Thyroid gland (tissue), 4 donors: ENCODE measurements at regions of chr19 and their contacts with region 1.

Region 1: GRCh38 chr19:16771618-16772017 is 52.0 kb downstream of the NWD1 start:
- DNase-seq: peak; percentile 73 to 78
- H3K4me3 ChIP-seq: no peak overlapping the region
- H3K27ac ChIP-seq: no peak overlapping the region
- H3K4me1 ChIP-seq: no peaks in the 10 kb centered on the region
- H3K27me3 ChIP-seq: no peaks in the 10 kb centered on the region
- CTCF ChIP-seq: peak; percentile 44 to 84 (median 77)
- POLR2A ChIP-seq: no peak

Region 2: DNA sequence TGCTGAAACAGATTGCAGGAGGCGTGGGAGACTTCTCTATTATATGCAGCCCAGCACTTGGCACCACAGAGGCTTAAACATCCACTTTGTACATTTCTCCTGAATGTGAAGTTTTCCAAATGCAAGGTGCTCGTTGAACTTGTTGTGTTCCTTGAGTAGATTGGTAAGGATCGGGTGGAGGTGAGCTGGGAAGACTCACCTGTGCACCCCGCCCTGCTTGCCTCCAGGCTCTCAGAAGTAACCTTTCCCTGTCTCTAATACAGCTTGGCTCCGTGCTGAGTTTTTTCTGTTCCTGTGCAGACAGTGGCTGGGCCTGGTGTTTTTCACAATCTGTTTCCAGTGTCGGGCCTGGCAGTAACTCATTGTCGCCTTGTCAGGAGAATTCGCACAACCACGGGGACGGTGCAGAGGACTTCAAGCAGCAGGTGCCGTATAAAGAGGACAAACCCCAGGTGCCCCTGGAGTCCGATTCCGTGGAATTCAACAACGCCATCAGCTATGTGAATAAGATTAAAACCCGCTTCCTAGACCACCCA is 69.8 kb after region 1 on chr19:
- intact Hi-C with region 1: loop called (anchors 5 kb)
- DNase-seq: no peak
- H3K4me3 ChIP-seq: no peak overlapping the region
- H3K27ac ChIP-seq: no peak overlapping the region
- H3K4me1 ChIP-seq: no peaks in the 10 kb centered on the region
- H3K27me3 ChIP-seq: no peaks in the 10 kb centered on the region
- CTCF ChIP-seq: no peak
- POLR2A ChIP-seq: no peak

Region 3: DNA sequence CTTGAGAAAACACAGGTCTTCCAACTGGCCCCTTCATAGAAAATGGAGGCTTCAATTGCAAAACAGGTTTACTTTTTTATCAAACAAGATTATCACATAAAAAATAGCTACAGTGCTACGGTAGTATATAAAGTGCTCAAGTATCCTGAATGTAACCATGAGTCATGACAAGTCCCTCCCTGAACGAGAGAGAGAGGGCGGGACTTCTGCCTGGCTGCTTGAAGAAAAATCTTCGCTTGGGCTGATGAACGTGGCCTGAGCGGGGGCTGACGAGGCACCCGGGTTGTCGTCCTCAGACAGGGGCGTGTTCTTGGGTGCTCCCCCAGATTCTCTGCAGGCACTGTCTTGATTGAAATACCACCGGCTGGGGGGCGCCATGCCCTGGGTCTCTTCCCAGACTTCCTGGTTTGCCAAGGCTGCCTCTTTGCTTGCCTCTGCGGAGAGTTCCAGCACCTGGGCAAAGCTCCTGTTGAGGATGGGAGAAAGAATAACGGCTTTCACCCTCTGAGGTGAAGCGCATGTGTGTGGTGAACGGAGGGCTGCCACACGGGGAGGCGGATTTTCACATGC is 278.2 kb after region 1 on chr19:
- intact Hi-C with region 1: loop called (anchors 10 kb)
- DNase-seq: no peak
- H3K4me3 ChIP-seq: no peak overlapping the region
- H3K27ac ChIP-seq: peak overlapping the region in 1 of 3 donors; percentile 30
- H3K4me1 ChIP-seq: no peaks in the 10 kb centered on the region
- H3K27me3 ChIP-seq: no peaks in the 10 kb centered on the region
- CTCF ChIP-seq: no peak
- POLR2A ChIP-seq: no peak